H1 (cell line): ENCODE measurements at regions of chr5 and their contacts with region 1.

Region 1: DNA sequence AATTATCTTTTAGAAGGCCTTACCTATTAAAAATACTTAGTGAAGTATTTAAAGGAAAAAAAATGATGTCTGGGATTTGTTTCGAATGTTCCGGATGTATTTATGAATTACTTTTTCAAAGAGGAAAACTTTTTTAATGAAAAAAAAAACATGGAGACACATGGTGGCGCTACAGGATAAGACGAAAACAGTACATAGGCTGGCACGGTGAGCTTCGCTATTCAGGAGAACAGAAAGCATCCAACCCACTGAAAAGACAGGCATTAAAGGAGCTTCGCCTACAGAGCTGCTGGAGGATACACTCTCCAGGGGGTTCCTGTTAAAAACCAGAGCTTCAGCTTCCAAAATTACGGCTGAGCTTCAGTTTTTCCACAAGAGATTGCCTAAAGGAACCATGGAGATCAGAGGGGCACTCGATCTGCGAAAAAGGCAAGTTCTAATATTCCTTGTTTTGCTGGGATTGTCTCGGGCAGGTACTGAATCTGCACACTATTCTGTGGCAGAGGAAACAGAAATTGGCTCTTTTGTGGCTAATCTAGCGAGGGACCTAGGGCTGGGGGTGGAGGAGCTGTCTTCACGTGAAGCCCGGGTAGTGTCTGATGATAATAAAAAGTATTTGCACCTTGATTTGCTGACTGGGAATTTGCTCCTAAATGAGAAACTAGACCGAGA is at the start of gene PCDHB14:
- DNase-seq: no peak
- H3K4me3 ChIP-seq: peak within 1 kb of the TSS; percentile 8 to 50 (median 29); a peak in 5 of 8 replicates
- H3K27ac ChIP-seq: no peak within 1 kb of the TSS
- H3K4me1 ChIP-seq: peaks cover 2 to 3% (median 3%) of the 10 kb centered on the region in 4 experiments; a peak in 2 of 7 replicates
- H3K27me3 ChIP-seq: no peaks in the 10 kb centered on the region
- CTCF ChIP-seq: peak in 2 of 3 experiments; percentile 50 to 64; a peak in 3 of 4 replicates
- EP300 ChIP-seq: no peak
- POLR2A ChIP-seq: no peak
- RAD21 ChIP-seq: peak; percentile 81 to 85
- total RNA-seq, gene PCDHB14: 2.7 and 2.9 TPM in 2 replicates

Region 2: DNA sequence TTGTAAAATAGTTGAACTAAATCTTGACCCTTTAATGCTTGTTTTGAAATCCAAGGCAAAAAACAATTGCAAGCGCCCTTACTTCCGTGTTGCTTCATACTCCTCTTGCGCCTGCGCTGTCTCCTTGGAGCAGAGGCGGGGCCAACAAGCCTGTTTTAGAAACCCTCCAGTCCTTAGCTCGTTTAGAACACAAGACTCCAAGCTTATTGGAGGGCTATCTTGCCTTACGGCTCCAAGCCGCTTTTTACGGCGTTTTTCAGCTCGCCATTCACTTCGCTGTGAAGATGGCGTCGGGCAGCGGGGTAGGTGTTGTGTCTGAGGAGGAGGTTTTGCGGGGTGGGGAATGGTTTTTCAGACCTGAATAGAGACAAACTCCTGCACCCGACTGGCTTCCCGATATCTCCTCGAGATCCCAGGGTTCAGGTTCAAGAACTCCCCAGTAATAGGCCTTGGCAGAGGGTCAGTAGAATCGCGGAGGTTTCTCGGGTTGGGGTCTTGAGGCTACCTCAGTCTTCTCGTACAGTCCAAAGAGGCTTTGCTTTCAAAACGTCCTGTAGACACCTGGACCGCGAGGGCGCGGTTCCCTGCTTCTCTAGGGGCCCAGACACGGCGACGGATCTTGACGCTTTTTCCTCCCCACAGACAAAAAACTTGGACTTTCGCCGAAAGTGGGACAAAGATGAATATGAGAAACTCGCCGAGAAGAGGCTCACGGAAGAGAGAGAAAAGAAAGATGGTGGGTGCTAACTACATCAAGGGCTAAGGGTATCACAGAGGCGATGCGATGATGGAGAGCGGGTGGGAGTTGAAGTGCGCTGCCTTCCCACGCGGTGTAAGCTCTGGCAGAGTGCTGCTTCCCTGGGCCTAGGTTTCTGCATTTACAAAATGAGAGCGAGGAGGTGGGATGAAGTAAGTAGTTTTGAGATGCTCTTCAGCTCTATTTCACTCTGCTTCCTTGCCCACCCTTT is 522.8 kb before region 1 on chr5 and contains the start of gene ZMAT2:
- CTCF ChIA-PET with region 1: no interaction called
- POLR2A ChIA-PET with region 1: no interaction called
- DNase-seq: peak; percentile 86 to 87
- H3K4me3 ChIP-seq: peak within 1 kb of the TSS; percentile 92 to 98 (median 97)
- H3K27ac ChIP-seq: peak within 1 kb of the TSS; percentile 65
- H3K4me1 ChIP-seq: 0 out of 7 replicates have a peak, but pooled peaks cover 0 to 4% (median 0%) of the 10 kb centered on the region in 4 experiments
- H3K27me3 ChIP-seq: no peaks in the 10 kb centered on the region
- CTCF ChIP-seq: no peak
- EP300 ChIP-seq: no peak
- POLR2A ChIP-seq: peak; percentile 70 to 90
- RAD21 ChIP-seq: no peak
- total RNA-seq, gene ZMAT2: 56.8 and 58.8 TPM in 2 replicates

Region 3: DNA sequence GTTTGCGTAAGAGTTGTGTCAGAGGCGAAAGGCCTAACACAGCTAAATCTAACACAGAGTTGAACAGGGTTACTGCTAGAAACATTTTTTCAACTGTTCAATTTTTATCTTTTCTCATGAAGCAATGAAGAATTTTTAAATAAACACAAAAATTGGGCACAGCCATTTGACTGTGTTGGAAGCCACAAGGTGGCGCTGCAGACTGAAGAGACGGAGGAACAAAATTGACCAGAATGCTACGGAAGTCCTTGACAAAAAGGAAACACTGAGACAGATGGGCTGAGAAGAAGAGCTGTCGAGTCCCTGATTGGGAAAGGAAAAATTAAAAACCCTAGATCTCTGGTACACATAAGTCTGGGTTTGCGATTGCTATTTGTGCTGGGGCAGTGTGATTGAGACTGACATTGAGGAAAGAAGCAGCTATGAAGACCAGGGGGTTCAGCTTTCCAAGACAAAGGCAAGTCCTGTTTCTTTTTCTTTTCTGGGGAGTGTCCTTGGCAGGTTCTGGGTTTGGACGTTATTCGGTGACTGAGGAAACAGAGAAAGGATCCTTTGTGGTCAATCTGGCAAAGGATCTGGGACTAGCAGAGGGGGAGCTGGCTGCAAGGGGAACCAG is 36.2 kb before region 1 on chr5 and contains the start of gene PCDHB9:
- CTCF ChIA-PET with region 1: interaction called, 26 read pairs
- POLR2A ChIA-PET with region 1: interaction called, 3 read pairs
- DNase-seq: peak in 1 of 2 experiments; percentile 80
- H3K4me3 ChIP-seq: peak within 1 kb of the TSS in 2 of 4 experiments; percentile 11 to 27; a peak in 1 of 8 replicates
- H3K27ac ChIP-seq: no peak within 1 kb of the TSS
- H3K4me1 ChIP-seq: 0 out of 7 replicates have a peak, but pooled peaks cover 0 to 2% (median 0%) of the 10 kb centered on the region in 4 experiments
- H3K27me3 ChIP-seq: no peaks in the 10 kb centered on the region
- CTCF ChIP-seq: peak; percentile 53 to 83 (median 81)
- EP300 ChIP-seq: no peak
- POLR2A ChIP-seq: no peak
- RAD21 ChIP-seq: peak; percentile 52 to 61
- total RNA-seq, gene PCDHB9: 1.6 and 3.8 TPM in 2 replicates

Region 4: GRCh38 chr5:141208478-141208877 is 14.8 kb before region 1 on chr5 and contains the start of gene PCDHB12:
- CTCF ChIA-PET with region 1: interaction called, 21 read pairs
- POLR2A ChIA-PET with region 1: no interaction called
- DNase-seq: no peak
- H3K4me3 ChIP-seq: peak within 1 kb of the TSS in 2 of 4 experiments; percentile 10 to 34; a peak in 2 of 8 replicates
- H3K27ac ChIP-seq: no peak within 1 kb of the TSS
- H3K4me1 ChIP-seq: no peaks in the 10 kb centered on the region
- H3K27me3 ChIP-seq: no peaks in the 10 kb centered on the region
- CTCF ChIP-seq: peak in 2 of 3 experiments; percentile 11 to 48; a peak in 3 of 4 replicates
- EP300 ChIP-seq: no peak
- POLR2A ChIP-seq: no peak
- RAD21 ChIP-seq: peak; percentile 42 to 45
- total RNA-seq, gene PCDHB12: 2.0 and 3.0 TPM in 2 replicates

Region 5: GRCh38 chr5:141272906-141273305 is 49.7 kb after region 1 on chr5:
- CTCF ChIA-PET with region 1: interaction called, 16 read pairs
- POLR2A ChIA-PET with region 1: no interaction called
- DNase-seq: peak; percentile 3 to 44
- H3K4me3 ChIP-seq: no peak overlapping the region
- H3K27ac ChIP-seq: no peak overlapping the region
- H3K4me1 ChIP-seq: no peaks in the 10 kb centered on the region
- H3K27me3 ChIP-seq: no peaks in the 10 kb centered on the region
- CTCF ChIP-seq: peak in 2 of 3 experiments; percentile 41 to 49; a peak in 2 of 4 replicates
- EP300 ChIP-seq: no peak
- POLR2A ChIP-seq: no peak
- RAD21 ChIP-seq: peak; percentile 37 to 49; a peak in 3 of 4 replicates

Region 6: DNA sequence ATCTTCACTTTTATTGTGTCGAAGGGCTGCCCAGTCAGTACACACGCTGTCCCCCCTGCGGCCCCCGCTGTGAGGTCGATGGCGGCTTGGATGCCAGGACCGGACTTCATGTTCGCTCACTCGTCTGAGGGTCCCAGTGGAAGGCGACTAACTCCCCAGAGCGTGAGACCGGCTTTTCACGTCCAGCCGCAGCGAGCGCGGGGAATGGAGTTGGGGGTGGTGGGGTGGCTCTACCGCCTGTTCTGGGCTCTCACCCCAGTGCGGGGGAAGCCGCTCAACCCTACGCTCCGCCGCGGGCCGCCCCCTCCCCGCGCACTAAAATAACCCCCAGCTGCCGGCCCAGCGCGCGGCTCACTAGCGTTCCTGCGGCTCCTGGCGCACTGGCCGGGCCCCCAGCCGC is 80.5 kb after region 1 on chr5 and contains the start of gene SLC25A2:
- CTCF ChIA-PET with region 1: no interaction called
- POLR2A ChIA-PET with region 1: no interaction called
- DNase-seq: no peak
- H3K4me3 ChIP-seq: no peak within 1 kb of the TSS
- H3K27ac ChIP-seq: no peak within 1 kb of the TSS
- H3K4me1 ChIP-seq: no peaks in the 10 kb centered on the region
- H3K27me3 ChIP-seq: no peaks in the 10 kb centered on the region
- CTCF ChIP-seq: no peak
- EP300 ChIP-seq: no peak
- POLR2A ChIP-seq: no peak
- RAD21 ChIP-seq: no peak
- total RNA-seq, gene SLC25A2: not detected in 2 replicates

Region 7: DNA sequence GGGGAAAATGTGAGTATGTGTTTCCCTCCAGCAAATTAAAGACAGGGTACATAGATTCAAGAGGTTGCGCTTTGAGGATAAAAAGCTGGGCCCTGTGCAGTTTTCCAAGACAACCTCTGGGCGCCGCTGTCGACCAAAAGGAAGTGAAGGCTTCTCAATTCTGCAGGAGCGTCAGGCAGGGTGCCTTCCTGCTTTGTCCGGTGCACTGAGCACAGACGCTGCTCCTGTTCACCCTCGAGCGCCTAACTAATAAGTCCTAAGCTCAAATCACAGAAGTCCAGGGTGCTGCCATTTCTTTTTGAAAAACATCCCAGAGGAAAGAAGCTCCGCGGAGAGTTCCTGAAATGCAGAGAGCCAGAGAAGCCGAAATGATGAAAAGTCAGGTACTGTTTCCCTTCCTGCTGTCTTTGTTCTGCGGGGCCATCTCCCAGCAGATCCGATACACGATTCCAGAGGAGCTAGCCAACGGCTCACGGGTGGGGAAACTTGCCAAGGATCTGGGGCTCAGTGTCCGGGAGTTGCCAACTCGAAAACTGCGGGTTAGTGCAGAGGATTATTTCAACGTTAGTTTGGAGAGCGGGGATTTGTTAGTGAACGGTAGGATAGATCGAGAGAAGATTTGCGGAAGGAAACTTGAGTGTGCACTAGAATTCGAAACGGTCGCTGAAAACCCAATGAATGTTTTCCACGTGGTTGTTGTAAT is 126.8 kb after region 1 on chr5 and contains the start of gene PCDHGB1:
- CTCF ChIA-PET with region 1: interaction called, 13 read pairs
- POLR2A ChIA-PET with region 1: no interaction called
- DNase-seq: peak in 1 of 2 experiments; percentile 83
- H3K4me3 ChIP-seq: peak within 1 kb of the TSS; percentile 17 to 53 (median 31); a peak in 7 of 8 replicates
- H3K27ac ChIP-seq: no peak within 1 kb of the TSS
- H3K4me1 ChIP-seq: peaks cover 0 to 5% (median under 1%) of the 10 kb centered on the region in 4 experiments; a peak in 1 of 7 replicates
- H3K27me3 ChIP-seq: no peaks in the 10 kb centered on the region
- CTCF ChIP-seq: peak; percentile 69 to 86 (median 75)
- EP300 ChIP-seq: no peak
- POLR2A ChIP-seq: peak in 1 of 2 experiments; percentile 65; a peak in 1 of 3 replicates
- RAD21 ChIP-seq: peak; percentile 74 to 81
- total RNA-seq, gene PCDHGB1: 2.8 and 3.9 TPM in 2 replicates

Region 8: GRCh38 chr5:141512390-141512910 is 289.2 kb after region 1 on chr5:
- CTCF ChIA-PET with region 1: interaction called, 17 read pairs
- POLR2A ChIA-PET with region 1: no interaction called
- DNase-seq: peak; percentile 93 to 99
- H3K4me3 ChIP-seq: peak overlapping the region; percentile 61 to 83 (median 76)
- H3K27ac ChIP-seq: no peak overlapping the region
- H3K4me1 ChIP-seq: peaks cover 7 to 35% (median 19%) of the 10 kb centered on the region in 4 experiments
- H3K27me3 ChIP-seq: no peaks in the 10 kb centered on the region
- CTCF ChIP-seq: peak in 2 of 3 experiments; percentile 97 to 98; a peak in 3 of 4 replicates
- EP300 ChIP-seq: no peak; a peak in 1 of 3 replicates
- POLR2A ChIP-seq: peak in 1 of 2 experiments; percentile 60; a peak in 2 of 3 replicates
- RAD21 ChIP-seq: peak; percentile 80 to 86

Region 9: DNA sequence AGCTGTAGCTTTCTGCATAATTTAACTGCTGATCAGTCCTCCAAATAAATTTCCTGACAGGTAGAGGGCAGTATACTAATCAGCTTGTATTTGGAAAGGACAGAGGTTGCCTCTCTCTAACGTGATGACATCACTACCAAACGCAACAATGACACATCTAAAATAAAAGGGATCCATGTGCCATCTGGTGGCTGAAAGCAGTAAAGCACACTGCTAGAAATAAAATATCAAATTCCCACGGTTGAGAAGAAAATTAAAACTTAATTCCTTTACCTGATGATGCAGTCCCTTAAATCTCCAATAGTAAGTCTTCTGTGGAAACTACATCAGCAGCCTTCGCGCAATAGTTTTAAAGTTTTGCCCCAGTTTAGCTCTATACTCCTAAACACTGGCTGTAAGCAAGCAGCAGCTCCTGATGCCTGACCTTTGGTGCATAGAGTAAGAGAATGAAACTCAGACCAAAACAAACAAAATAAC is 341.0 kb after region 1 on chr5:
- CTCF ChIA-PET with region 1: interaction called, 27 read pairs
- POLR2A ChIA-PET with region 1: interaction called, 5 read pairs
- DNase-seq: peak; percentile 56 to 62
- H3K4me3 ChIP-seq: no peak overlapping the region
- H3K27ac ChIP-seq: peak overlapping the region; percentile 26; the same call in 1 of the 2 replicates
- H3K4me1 ChIP-seq: peaks cover 0 to 7% (median 3%) of the 10 kb centered on the region in 4 experiments; a peak in 4 of 7 replicates
- H3K27me3 ChIP-seq: no peaks in the 10 kb centered on the region
- CTCF ChIP-seq: peak in 2 of 3 experiments; percentile 96; a peak in 3 of 4 replicates
- EP300 ChIP-seq: peak in 1 of 2 experiments; percentile 89; a peak in 2 of 3 replicates
- POLR2A ChIP-seq: no peak
- RAD21 ChIP-seq: peak; percentile 55 to 65